CD8-positive, alpha-beta T cell (primary cell): ENCODE measurements at regions of chr14 and their contacts with region 1.

Region 1: GRCh38 chr14:63901434-63902085 is 48.8 kb downstream of the SYNE2 start:
- DNase-seq: peak in 2 of 9 experiments; percentile 28 to 44
- ATAC-seq: no peak
- H3K4me3 ChIP-seq: no peak overlapping the region
- H3K4me3 Mint-ChIP-seq: no peak overlapping the region
- H3K27ac ChIP-seq: peak overlapping the region in 1 of 2 experiments; percentile 44
- H3K27ac Mint-ChIP-seq: no peak overlapping the region
- H3K4me1 ChIP-seq: peaks cover 23% of the 10 kb centered on the region
- H3K4me1 Mint-ChIP-seq: peaks cover 66% of the 10 kb centered on the region
- H3K27me3 ChIP-seq: no peaks in the 10 kb centered on the region
- H3K27me3 Mint-ChIP-seq: no peaks in the 10 kb centered on the region
- CTCF ChIP-seq: no peak

Region 2: DNA sequence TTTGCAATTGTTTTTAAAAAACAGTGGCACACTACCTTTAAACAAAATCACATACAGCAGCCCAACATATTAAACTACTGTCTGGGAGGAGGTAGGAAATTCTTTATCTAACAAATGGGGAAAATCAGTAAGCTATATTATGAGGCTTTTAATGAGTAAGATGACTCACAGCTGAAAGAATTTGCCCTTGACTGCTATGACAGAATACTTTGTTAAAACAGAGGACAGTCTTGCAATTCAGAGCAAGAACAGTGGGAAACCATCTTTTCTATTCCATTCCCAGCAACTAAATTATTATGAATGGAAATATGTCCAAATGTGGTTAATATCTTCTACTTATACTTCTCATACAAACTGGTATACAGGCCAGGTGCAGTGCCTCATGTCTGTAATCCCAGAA is 124.5 kb before region 1 on chr14:
- CTCF ChIA-PET with region 1: no interaction called
- POLR2A ChIA-PET with region 1: no interaction called
- intact Hi-C with region 1: no loop called
- DNase-seq: no peak
- ATAC-seq: no peak
- H3K4me3 ChIP-seq: no peak overlapping the region
- H3K4me3 Mint-ChIP-seq: no peak overlapping the region
- H3K27ac ChIP-seq: no peak overlapping the region
- H3K27ac Mint-ChIP-seq: no peak overlapping the region
- H3K4me1 ChIP-seq: no peaks in the 10 kb centered on the region
- H3K4me1 Mint-ChIP-seq: no peaks in the 10 kb centered on the region
- H3K27me3 ChIP-seq: no peaks in the 10 kb centered on the region
- H3K27me3 Mint-ChIP-seq: no peaks in the 10 kb centered on the region
- CTCF ChIP-seq: no peak

Region 3: DNA sequence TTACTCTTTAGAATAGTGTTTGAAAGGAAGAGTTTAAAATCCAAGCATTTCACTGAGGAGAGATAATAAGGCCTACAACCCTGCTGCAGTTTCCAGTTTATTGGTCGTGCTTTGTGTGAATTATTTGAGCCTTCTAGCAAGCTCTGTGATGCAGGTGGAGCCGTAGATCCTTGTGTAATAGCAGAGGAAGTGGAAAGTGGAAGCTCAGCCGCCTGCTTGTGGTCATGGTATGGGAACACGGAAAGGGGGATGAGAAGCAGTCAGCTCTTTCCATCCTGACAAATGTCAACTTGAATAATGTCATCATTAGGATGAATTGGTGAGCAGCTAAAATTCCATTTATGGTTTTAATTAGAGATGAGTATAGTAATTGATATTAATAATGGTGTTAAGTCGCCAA is 19.6 kb before region 1 on chr14:
- CTCF ChIA-PET with region 1: no interaction called
- POLR2A ChIA-PET with region 1: no interaction called
- intact Hi-C with region 1: no loop called
- DNase-seq: no peak
- ATAC-seq: no peak
- H3K4me3 ChIP-seq: no peak overlapping the region
- H3K4me3 Mint-ChIP-seq: no peak overlapping the region
- H3K27ac ChIP-seq: no peak overlapping the region
- H3K27ac Mint-ChIP-seq: no peak overlapping the region
- H3K4me1 ChIP-seq: peaks cover 2% of the 10 kb centered on the region
- H3K4me1 Mint-ChIP-seq: peaks cover 30% of the 10 kb centered on the region
- H3K27me3 ChIP-seq: no peaks in the 10 kb centered on the region
- H3K27me3 Mint-ChIP-seq: no peaks in the 10 kb centered on the region
- CTCF ChIP-seq: no peak

Region 4: DNA sequence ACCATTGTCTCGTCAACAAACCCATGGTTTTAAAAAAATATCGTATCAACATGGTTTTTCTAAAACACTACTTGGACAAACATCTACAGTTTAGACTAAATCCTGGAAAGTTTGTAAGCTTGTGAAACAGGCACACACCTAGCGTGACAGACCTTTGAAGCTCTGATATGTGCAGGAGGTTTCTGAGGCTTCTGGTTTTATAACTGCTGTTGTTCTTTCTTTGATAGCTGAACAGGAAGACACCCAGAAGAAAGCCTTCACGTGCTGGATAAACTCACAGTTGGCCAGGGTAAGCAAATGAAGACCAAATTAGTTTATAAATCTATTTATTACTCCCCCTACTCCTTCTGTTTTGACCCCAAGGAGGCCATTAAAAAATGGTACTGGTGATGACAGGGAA is 38.8 kb after region 1 on chr14:
- CTCF ChIA-PET with region 1: no interaction called
- POLR2A ChIA-PET with region 1: interaction called, 6 read pairs
- intact Hi-C with region 1: loop called in 1 of 2 experiments (anchors 5 kb)
- DNase-seq: peak in 3 of 9 experiments; percentile 8 to 64 (median 43)
- ATAC-seq: peak; percentile 72
- H3K4me3 ChIP-seq: no peak overlapping the region
- H3K4me3 Mint-ChIP-seq: peak overlapping the region; percentile 42
- H3K27ac ChIP-seq: peak overlapping the region; percentile 8 to 56
- H3K27ac Mint-ChIP-seq: peak overlapping the region; percentile 84
- H3K4me1 ChIP-seq: peaks cover 47% of the 10 kb centered on the region
- H3K4me1 Mint-ChIP-seq: peaks cover 26% of the 10 kb centered on the region
- H3K27me3 ChIP-seq: no peaks in the 10 kb centered on the region
- H3K27me3 Mint-ChIP-seq: no peaks in the 10 kb centered on the region
- CTCF ChIP-seq: no peak

Region 5: GRCh38 chr14:64026600-64026999 is 125.0 kb after region 1 on chr14:
- CTCF ChIA-PET with region 1: no interaction called
- POLR2A ChIA-PET with region 1: no interaction called
- intact Hi-C with region 1: no loop called
- DNase-seq: peak in 1 of 9 experiments; percentile 18
- ATAC-seq: no peak
- H3K4me3 ChIP-seq: no peak overlapping the region
- H3K4me3 Mint-ChIP-seq: no peak overlapping the region
- H3K27ac ChIP-seq: no peak overlapping the region
- H3K27ac Mint-ChIP-seq: no peak overlapping the region
- H3K4me1 ChIP-seq: no peaks in the 10 kb centered on the region
- H3K4me1 Mint-ChIP-seq: no peaks in the 10 kb centered on the region
- H3K27me3 ChIP-seq: no peaks in the 10 kb centered on the region
- H3K27me3 Mint-ChIP-seq: no peaks in the 10 kb centered on the region
- CTCF ChIP-seq: no peak

Region 6: GRCh38 chr14:64049616-64050381 is 148.2 kb after region 1 on chr14:
- CTCF ChIA-PET with region 1: no interaction called
- POLR2A ChIA-PET with region 1: no interaction called
- intact Hi-C with region 1: no loop called
- DNase-seq: no peak
- ATAC-seq: no peak
- H3K4me3 ChIP-seq: no peak overlapping the region
- H3K4me3 Mint-ChIP-seq: no peak overlapping the region
- H3K27ac ChIP-seq: no peak overlapping the region
- H3K27ac Mint-ChIP-seq: no peak overlapping the region
- H3K4me1 ChIP-seq: no peaks in the 10 kb centered on the region
- H3K4me1 Mint-ChIP-seq: no peaks in the 10 kb centered on the region
- H3K27me3 ChIP-seq: no peaks in the 10 kb centered on the region
- H3K27me3 Mint-ChIP-seq: no peaks in the 10 kb centered on the region
- CTCF ChIP-seq: no peak